ENCODE measurements at regions of chr6 and their contacts with region 1.

Region 1: GRCh38 chr6:5143634-5144311 is 58.6 kb downstream of the PPP1R3G start:
- DNase-seq: peak; percentile 90 to 95
- ATAC-seq: peak; percentile 83
- H3K4me3 ChIP-seq: no peak overlapping the region
- H3K27ac ChIP-seq: no peak overlapping the region
- H3K4me1 ChIP-seq: no peaks in the 10 kb centered on the region
- H3K27me3 ChIP-seq: no peaks in the 10 kb centered on the region

Region 2: GRCh38 chr6:4914420-4915159 is 229.2 kb before region 1 on chr6:
- intact Hi-C with region 1: no loop called
- DNase-seq: no peak
- ATAC-seq: no peak
- H3K4me3 ChIP-seq: no peak overlapping the region
- H3K27ac ChIP-seq: no peak overlapping the region
- H3K4me1 ChIP-seq: peaks cover 2 to 23% of the 10 kb centered on the region in 2 donors
- H3K27me3 ChIP-seq: no peaks in the 10 kb centered on the region

Region 3: DNA sequence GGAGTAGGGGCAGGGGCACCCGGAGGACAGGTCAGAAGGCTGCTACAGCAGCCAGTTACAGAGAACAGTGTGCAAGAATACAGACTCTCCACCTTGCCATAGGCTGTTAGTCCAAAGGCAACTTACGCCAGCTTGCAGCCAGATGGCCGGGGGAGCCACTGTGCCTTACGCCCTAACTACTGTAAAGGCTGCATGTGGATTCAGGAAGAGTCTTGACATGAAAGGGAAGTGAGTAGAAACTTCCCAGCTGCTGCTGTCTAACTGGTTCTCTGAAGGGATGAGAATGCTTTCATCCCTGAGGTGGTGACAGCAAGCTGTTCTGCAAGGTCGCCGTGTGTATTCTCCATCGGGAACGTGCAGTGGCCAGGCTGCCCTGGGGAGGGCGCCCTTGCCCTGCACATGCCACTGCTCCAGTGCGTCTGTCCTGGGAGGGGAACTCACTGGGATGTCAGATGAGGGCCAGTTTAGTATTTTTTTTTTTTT is 70.8 kb after region 1 on chr6:
- intact Hi-C with region 1: loop called (anchors 1 to 5 kb)
- DNase-seq: peak; percentile 60 to 80
- ATAC-seq: peak; percentile 93
- H3K4me3 ChIP-seq: no peak overlapping the region
- H3K27ac ChIP-seq: no peak overlapping the region
- H3K4me1 ChIP-seq: no peaks in the 10 kb centered on the region
- H3K27me3 ChIP-seq: no peaks in the 10 kb centered on the region

Region 4: DNA sequence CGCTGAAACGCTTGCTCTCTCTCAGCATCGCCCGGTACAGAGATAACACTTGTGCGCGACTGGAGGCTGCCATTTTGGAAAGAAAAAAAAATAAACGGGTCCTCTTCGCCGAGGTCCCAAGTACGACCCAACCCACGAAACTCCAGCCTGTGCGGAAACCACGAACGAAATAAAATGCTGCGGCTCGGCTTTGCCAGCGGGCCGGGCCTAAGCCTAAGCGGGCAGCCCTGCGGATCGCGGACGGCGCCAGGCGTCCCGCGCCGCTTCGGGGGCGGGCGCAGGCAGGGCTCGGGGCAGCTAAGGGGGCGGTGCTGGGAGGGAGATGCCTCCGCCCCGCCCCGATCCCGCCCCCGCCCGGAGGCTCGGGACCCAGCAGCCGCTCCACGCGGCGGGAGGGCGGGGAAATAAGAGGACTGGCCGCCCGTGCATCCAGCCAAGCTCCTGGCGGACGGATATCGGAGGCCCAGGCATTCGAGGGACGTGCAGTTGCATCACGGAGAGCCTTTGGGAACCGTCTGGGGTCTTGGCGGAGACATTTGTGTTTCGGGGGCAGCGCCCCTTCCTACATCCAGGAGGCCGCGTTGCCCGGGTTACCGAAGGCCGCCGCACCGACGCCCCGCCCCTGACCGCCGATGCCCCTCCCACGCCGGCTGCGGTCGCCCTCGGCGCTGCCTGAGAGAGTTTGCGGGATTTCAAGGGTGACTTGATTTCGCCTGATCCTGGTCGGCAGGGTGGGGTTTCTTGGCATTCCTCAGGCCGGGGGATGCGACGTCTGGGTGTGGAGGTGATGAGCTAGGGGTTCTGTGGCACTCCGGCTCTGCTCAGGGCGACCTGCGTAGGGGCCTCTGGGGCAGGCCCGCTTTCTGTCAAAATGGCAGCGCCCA is 117.1 kb after region 1 on chr6 and contains the starts of genes FARS2 and LYRM4:
- intact Hi-C with region 1: loop called in 1 of 2 experiments (anchors 2 kb)
- DNase-seq: peak; percentile 94 to 96
- ATAC-seq: peak; percentile 99
- H3K4me3 ChIP-seq: peak within 1 kb of the TSS; percentile 75 to 90
- H3K27ac ChIP-seq: peak within 1 kb of the TSS; percentile 71 to 72
- H3K4me1 ChIP-seq: peaks cover 0 to 7% of the 10 kb centered on the region in 2 donors
- H3K27me3 ChIP-seq: no peaks in the 10 kb centered on the region
- total RNA-seq, gene FARS2: 11.1 to 14.2 TPM
- total RNA-seq, gene LYRM4: 17.9 to 23.9 TPM

Region 5: DNA sequence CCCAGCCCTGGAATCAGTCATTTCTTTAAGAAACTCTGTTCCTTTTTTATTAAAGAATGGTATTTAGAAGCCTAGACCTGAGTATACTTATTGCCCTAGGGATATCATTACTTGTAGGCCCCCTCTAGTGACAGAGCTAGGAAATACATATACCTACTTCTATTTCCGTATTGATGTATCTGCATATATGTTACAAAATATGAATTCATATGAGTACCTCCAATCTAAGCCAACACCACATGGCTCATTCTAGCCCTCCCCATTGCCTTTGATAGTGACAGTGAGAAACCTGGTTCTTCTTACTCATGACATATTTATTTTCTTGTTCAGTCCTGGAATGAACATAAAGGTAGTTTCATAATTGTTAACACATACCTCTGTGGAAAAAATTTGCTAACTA is 254.8 kb after region 1 on chr6:
- intact Hi-C with region 1: loop called (anchors 10 kb)
- DNase-seq: no peak
- ATAC-seq: no peak
- H3K4me3 ChIP-seq: no peak overlapping the region
- H3K27ac ChIP-seq: no peak overlapping the region
- H3K4me1 ChIP-seq: no peaks in the 10 kb centered on the region
- H3K27me3 ChIP-seq: peaks cover 0 to 1% of the 10 kb centered on the region in 2 donors

Region 6: DNA sequence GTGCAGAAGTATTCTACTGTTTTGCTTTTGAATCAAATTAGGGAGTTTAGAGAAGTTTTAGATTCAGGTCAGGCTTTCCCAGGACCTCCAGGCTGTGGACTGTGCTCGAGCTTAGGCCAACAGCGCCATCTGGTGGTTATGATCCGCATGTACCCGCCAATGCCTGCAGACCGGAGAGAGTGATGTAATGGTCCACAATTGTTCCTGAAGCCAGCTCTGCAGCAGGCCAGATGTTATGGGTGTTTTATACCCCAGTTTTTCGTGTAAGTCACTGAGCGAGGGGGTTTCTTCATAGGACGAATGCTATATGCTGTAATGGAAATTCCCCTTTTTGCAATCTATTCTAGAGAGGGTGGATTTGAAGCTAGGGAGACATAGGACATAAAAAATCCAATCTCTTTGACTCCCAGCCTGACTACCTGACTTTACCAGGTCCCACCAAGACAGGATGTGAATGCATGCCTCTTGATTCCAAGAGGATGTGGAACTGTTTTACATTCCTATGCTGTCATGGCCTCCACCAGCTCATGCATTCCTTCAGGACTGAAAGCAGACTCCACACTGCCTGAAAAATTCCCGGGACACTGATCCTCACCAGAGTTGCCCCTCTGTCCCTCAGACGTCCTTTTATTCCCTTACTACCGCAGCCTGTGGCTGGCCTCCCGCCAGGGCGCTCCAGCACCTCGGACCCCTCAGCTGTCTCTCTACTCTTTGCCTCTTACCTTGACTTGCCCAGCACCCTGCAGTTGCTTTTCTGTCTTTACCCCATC is 1403.5 kb after region 1 on chr6:
- intact Hi-C with region 1: loop called (anchors 10 kb)
- DNase-seq: peak; percentile 92 to 94
- ATAC-seq: peak; percentile 96
- H3K4me3 ChIP-seq: peak overlapping the region in 1 of 2 donors; percentile 1
- H3K27ac ChIP-seq: no peak overlapping the region
- H3K4me1 ChIP-seq: no peaks in the 10 kb centered on the region
- H3K27me3 ChIP-seq: no peaks in the 10 kb centered on the region